MCF 10A (cell line): ENCODE measurements at regions of chr13 and their contacts with region 1.

Region 1: DNA sequence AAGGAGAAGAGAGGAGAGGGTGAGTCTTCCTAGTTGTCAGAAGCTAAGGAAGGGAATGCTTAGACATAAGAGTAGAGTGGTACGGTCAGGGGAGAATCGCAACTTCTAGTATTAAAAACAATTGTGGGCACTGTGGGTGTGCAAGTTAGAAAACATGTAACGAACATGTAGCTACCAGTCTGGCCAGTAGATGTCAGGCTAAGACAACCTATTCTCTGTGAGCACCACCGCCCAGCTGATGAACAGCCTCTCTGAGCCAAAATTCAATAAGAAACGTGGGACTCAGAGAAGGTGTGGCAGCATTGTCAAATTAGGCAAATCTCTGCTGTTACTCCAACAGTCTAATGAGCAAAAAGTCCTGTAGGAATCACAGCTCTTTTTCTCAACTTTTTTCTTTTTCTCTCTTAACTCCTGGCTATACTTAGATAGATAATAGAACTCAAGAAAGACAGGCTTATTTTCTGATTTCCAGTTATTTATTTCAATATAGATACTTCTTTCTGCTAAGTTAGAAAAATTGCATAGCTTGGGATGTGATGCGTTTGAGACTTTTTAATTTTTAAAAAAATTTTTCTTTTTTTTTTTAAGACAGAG is 186.2 kb downstream of the USP12 start:
- DNase-seq: peak; percentile 85
- H3K4me3 Mint-ChIP-seq: no peak overlapping the region
- H3K27ac Mint-ChIP-seq: no peak overlapping the region
- H3K4me1 Mint-ChIP-seq: peaks cover 18% of the 10 kb centered on the region
- H3K27me3 Mint-ChIP-seq: peaks cover 7% of the 10 kb centered on the region
- CTCF ChIP-seq: peak; percentile 81

Region 2: DNA sequence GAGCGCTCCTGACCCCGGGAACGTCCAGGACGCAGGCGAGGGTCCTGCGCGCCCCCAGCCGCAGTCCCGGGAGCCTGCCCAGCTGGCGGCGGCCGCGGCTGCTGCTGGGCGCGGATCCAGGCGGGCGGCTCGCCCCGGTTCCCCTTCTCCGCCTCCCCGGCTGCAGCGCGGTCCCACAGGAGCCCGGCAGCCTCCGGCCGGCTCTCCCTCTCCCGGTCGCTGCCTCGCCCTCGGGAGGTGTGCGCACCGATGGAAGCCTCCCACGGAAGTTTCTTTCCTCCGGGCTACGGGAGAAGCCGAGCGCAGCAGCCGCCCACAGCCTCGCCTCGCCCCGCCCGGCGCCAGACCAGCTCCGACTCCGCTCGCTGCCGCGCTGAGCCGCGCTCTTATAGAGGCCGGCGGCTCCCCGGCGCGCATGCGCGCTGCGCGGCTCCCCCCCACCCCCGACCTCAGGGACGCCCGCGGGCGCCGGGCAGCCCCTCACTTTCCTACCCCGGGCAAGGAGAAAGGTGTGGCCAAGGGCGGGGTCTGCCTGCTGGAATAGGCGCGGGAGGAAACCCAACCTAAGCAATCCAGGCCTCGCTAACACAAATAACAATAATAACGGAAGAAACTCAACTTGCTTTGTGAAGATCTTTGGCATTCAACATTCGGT is 933.6 kb before region 1 on chr13 and contains the start of gene SHISA2:
- CTCF ChIA-PET with region 1: no interaction called
- POLR2A ChIA-PET with region 1: no interaction called
- intact Hi-C with region 1: no loop called
- DNase-seq: peak; percentile 53
- H3K4me3 Mint-ChIP-seq: peak within 1 kb of the TSS; percentile 62
- H3K27ac Mint-ChIP-seq: no peak within 1 kb of the TSS
- H3K4me1 Mint-ChIP-seq: no peaks in the 10 kb centered on the region
- H3K27me3 Mint-ChIP-seq: no peaks in the 10 kb centered on the region
- CTCF ChIP-seq: no peak
- total RNA-seq, gene SHISA2: 0.86 and 1.2 TPM in 2 replicates

Region 3: DNA sequence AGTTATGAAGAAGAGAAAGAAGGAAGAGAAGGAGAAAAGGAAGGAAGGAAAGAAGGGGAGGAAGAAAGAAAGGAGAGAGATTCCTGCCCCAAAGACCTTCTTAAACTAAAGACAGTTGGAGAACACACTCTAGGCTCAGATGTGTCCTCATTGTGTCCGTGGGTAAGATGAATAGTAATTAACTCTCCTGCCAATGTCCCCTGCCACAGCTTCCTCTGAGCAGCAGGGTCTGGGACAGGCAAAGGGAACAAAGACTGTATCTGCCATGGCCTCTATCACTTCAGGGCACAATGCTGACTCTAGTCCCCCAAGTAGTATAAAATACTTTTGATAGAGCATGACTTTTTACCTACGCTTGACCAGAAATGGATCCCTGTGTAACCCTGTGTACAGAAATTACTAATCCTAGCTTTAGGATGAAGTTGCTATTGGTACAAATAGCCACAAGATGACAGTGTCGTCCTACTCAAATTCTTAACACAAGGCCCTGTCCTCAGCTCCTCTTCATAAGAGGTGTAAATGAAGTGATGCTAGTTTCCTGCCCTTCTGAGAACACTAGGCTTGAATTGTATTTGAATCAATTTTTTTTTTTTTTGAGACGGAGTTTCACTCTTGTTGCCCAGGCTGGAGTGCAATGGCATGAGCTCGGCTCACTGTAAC is 38.6 kb before region 1 on chr13:
- CTCF ChIA-PET with region 1: interaction called, 32 read pairs
- POLR2A ChIA-PET with region 1: no interaction called
- intact Hi-C with region 1: loop called (anchors 1 kb)
- DNase-seq: peak; percentile 59
- H3K4me3 Mint-ChIP-seq: no peak overlapping the region
- H3K27ac Mint-ChIP-seq: no peak overlapping the region
- H3K4me1 Mint-ChIP-seq: no peaks in the 10 kb centered on the region
- H3K27me3 Mint-ChIP-seq: no peaks in the 10 kb centered on the region
- CTCF ChIP-seq: peak; percentile 74

Region 4: DNA sequence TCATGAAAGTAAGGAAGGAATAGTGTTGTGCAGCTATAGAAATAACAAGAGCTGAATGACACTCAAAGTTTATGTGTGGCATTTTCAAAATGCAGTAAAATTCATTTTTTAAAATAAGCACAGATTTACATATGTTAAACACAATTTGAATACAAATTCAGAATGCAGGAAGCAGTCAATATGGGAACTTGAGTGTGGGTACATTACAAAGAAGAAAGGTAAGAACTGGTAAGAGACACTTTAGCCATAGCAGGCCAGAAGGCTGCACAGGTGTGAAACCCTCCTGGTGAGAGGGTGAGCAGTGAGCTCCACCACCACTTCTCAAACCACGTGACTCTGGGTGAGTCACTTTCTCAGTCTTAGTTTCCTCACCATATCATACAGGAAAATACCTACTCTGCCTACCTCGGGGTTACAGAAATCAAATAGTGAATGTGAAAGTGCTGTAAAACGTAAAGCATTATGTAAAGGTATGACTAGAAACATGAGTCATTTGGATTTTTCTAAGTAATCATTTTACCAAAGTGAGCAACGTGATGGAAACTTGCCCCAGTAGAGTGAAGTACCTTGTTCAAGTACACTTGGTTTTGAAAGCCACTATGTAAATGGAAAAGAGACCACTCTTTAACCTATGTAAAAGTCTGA is 145.7 kb after region 1 on chr13:
- CTCF ChIA-PET with region 1: interaction called, 13 read pairs
- POLR2A ChIA-PET with region 1: interaction called, 5 read pairs
- intact Hi-C with region 1: no loop called
- DNase-seq: peak; percentile 90
- H3K4me3 Mint-ChIP-seq: peak overlapping the region; percentile 38
- H3K27ac Mint-ChIP-seq: peak overlapping the region; percentile 35
- H3K4me1 Mint-ChIP-seq: peaks cover 27% of the 10 kb centered on the region
- H3K27me3 Mint-ChIP-seq: no peaks in the 10 kb centered on the region
- CTCF ChIP-seq: no peak

Region 5: GRCh38 chr13:27203854-27204253 is 218.5 kb after region 1 on chr13:
- CTCF ChIA-PET with region 1: interaction called, 10 read pairs
- POLR2A ChIA-PET with region 1: no interaction called
- intact Hi-C with region 1: loop called (anchors 1 kb)
- DNase-seq: peak; percentile 44
- H3K4me3 Mint-ChIP-seq: no peak overlapping the region
- H3K27ac Mint-ChIP-seq: no peak overlapping the region
- H3K4me1 Mint-ChIP-seq: no peaks in the 10 kb centered on the region
- H3K27me3 Mint-ChIP-seq: no peaks in the 10 kb centered on the region
- CTCF ChIP-seq: no peak

Region 6: DNA sequence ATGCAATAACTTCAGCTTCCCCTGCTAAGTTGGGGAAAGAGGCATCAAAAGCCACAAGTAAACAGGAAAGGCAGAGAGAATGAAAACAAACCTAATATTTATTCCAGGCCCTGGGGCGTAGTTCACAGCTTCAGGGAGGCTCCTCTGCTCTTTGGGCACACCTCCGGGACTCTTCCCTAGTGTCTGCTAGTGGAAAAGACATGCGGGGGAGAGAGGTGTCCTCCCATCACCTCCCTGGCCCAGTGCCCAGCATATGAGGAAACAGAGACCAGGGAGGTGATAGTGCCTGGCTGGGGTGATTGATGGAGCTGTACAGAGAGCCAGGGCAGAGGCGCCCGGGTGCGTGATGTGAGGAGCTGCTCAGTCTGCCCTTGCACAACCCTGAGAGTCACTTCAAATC is 356.2 kb after region 1 on chr13:
- CTCF ChIA-PET with region 1: interaction called, 33 read pairs
- POLR2A ChIA-PET with region 1: interaction called, 10 read pairs
- intact Hi-C with region 1: no loop called
- DNase-seq: peak; percentile 69
- H3K4me3 Mint-ChIP-seq: no peak overlapping the region
- H3K27ac Mint-ChIP-seq: peak overlapping the region; percentile 30
- H3K4me1 Mint-ChIP-seq: peaks cover 16% of the 10 kb centered on the region
- H3K27me3 Mint-ChIP-seq: peaks cover 18% of the 10 kb centered on the region
- CTCF ChIP-seq: no peak

Region 7: GRCh38 chr13:27374650-27375049 is 389.3 kb after region 1 on chr13:
- CTCF ChIA-PET with region 1: interaction called, 13 read pairs
- POLR2A ChIA-PET with region 1: no interaction called
- intact Hi-C with region 1: no loop called
- DNase-seq: peak; percentile 86
- H3K4me3 Mint-ChIP-seq: no peak overlapping the region
- H3K27ac Mint-ChIP-seq: no peak overlapping the region
- H3K4me1 Mint-ChIP-seq: no peaks in the 10 kb centered on the region
- H3K27me3 Mint-ChIP-seq: peaks cover 10% of the 10 kb centered on the region
- CTCF ChIP-seq: peak; percentile 66